Activated CD8-positive, alpha-beta T cell treated with anti-CD3 and anti-CD28 coated beads for 36 hours (primary cell): ENCODE measurements at regions of chr20 and their contacts with region 1.

Region 1: DNA sequence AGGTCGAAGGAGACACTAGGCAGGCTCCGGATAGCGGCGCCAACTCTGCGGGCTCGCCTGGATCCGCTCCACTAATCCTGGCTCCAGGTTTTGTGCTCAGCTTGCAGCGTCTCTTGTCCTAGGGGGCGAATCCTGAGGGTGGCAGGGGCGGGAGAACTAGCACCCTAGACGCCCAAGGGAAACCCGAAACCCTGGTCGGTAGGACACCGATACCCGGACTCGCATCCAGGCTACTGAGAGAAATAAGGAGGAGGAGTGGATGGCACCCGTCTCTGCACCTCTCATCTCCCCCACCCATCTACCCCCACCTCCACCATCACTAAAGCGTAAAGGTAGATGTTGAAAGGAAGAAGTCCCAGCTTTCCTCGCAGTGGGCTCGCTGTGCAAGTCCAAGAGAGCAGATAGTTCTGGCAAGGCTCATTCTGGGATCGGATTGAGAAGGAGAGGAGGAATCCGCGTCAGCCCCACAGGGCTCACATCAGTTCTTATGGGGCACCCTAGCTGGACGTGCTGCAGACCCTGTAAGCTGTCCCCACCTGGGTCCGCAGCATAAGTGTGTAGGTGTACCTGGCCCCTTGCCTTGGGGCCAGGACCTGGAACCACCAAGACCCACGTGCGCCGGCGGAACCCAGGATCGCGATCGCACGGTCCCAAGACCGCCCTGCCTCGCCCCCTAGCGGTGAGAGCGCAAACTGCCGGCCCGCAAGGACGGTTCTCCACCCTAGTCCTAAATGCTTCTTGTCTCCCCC is 6.9 kb downstream of the SLC32A1 start:
- DNase-seq: peak; percentile 86
- ATAC-seq: peak; percentile 77
- H3K4me3 Mint-ChIP-seq: peak overlapping the region; percentile 55
- H3K27ac Mint-ChIP-seq: no peak overlapping the region
- H3K4me1 Mint-ChIP-seq: peaks cover 44% of the 10 kb centered on the region
- H3K27me3 Mint-ChIP-seq: peaks cover 87% of the 10 kb centered on the region
- CTCF ChIP-seq: peak; percentile 99

Region 2: GRCh38 chr20:38645980-38646858 is 84.9 kb before region 1 on chr20:
- CTCF ChIA-PET with region 1: interaction called, 35 read pairs
- POLR2A ChIA-PET with region 1: no interaction called
- intact Hi-C with region 1: loop called (anchors 2 kb)
- DNase-seq: peak; percentile 86
- ATAC-seq: peak; percentile 96
- H3K4me3 Mint-ChIP-seq: peak overlapping the region; percentile 59
- H3K27ac Mint-ChIP-seq: no peak overlapping the region
- H3K4me1 Mint-ChIP-seq: no peaks in the 10 kb centered on the region
- H3K27me3 Mint-ChIP-seq: peaks cover 25% of the 10 kb centered on the region
- CTCF ChIP-seq: peak; percentile 96

Region 3: DNA sequence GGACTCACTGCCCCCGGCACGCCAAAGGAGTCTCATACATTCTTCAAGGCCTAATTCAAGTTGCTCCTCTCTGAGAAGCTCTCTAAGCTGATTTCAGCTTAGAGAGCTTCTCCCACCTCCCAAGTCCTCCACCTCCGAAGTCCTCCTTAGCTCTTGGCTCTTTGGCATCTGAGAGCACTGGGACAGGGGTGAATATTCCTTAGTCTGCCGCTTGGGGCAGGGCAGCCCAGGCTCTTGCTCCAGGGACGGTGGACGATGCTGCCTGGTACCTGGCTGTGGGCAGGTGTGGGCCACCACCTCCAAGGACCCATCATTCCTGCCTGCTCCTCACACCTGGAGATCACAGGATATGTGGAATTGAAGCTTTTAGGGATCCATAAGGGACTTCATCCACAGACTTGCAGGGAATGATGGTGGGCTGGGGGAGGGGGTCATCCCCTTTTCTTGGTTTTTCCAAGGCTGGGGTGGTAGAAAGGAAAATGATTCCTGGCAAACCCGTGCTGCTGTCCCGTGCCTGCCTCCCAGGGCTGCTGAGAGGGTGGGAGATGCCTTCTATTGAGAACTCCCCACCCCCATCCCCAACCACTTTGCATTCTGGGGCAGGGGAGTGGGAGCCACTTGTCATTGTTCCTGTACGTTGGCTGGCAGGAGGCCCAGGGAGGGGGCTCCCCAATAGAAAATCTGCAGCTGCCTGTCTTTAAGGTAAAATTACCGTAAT is 72.1 kb before region 1 on chr20:
- CTCF ChIA-PET with region 1: interaction called, 12 read pairs
- POLR2A ChIA-PET with region 1: no interaction called
- intact Hi-C with region 1: no loop called
- DNase-seq: peak; percentile 45
- ATAC-seq: peak; percentile 92
- H3K4me3 Mint-ChIP-seq: no peak overlapping the region
- H3K27ac Mint-ChIP-seq: no peak overlapping the region
- H3K4me1 Mint-ChIP-seq: no peaks in the 10 kb centered on the region
- H3K27me3 Mint-ChIP-seq: peaks cover 21% of the 10 kb centered on the region
- CTCF ChIP-seq: peak; percentile 69

Region 4: GRCh38 chr20:38685853-38686473 is 45.2 kb before region 1 on chr20:
- CTCF ChIA-PET with region 1: interaction called, 4 read pairs
- POLR2A ChIA-PET with region 1: no interaction called
- intact Hi-C with region 1: loop called (anchors 5 kb)
- DNase-seq: peak; percentile 71
- ATAC-seq: no peak
- H3K4me3 Mint-ChIP-seq: no peak overlapping the region
- H3K27ac Mint-ChIP-seq: no peak overlapping the region
- H3K4me1 Mint-ChIP-seq: no peaks in the 10 kb centered on the region
- H3K27me3 Mint-ChIP-seq: peaks cover 36% of the 10 kb centered on the region
- CTCF ChIP-seq: no peak

Region 5: DNA sequence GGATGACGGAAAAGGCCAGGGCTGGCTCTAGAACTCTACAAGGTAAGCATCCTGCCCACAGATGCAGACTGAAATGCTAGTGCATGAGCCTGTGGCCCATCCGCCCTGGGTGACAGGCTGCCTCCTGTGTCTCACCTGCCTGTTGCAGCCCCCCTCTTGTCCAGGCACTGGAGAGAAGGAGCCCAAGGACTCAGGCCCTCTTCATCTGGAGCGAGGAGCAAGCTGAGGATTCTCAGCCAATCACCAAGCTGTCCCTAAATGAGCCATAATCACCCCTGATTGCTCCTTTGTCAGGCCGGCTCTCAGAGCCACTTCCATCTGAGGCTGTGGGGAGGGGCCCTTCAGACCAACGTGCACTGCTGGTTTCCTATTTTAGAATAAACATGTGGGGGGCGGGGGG is 16.9 kb before region 1 on chr20:
- CTCF ChIA-PET with region 1: interaction called, 14 read pairs
- POLR2A ChIA-PET with region 1: interaction called, 4 read pairs
- intact Hi-C with region 1: no loop called
- DNase-seq: no peak
- ATAC-seq: no peak
- H3K4me3 Mint-ChIP-seq: no peak overlapping the region
- H3K27ac Mint-ChIP-seq: no peak overlapping the region
- H3K4me1 Mint-ChIP-seq: no peaks in the 10 kb centered on the region
- H3K27me3 Mint-ChIP-seq: peaks cover 34% of the 10 kb centered on the region
- CTCF ChIP-seq: no peak